Naive thymus-derived CD4-positive, alpha-beta T cell (primary cell): ENCODE measurements at regions of chr15 and their contacts with region 1.

Region 1: DNA sequence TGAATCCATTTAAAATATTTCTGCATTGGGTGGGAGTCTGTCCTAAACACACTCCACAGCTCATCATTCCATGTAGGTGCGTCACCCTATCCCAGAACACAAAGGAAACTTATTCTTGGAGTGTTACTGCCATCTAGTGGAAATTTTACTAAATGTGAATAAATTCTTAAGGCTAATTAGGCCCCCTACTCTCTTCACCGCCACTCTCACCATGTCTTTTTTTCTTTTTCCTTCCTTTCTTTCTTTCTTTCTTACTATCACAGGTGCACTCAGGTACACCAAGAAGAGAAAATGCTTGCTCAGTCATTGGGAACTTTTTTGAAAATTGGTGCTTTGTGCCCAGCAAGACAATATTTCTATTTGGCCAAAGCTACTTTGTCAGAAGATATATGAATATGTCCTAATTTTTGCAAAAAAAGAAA is 26.4 kb upstream of the ATP8B4 start:
- DNase-seq: peak in 6 of 9 donors; percentile 7 to 47 (median 36)
- ATAC-seq: peak; percentile 60
- H3K4me3 ChIP-seq: no peak overlapping the region
- H3K4me3 Mint-ChIP-seq: no peak overlapping the region
- H3K27ac ChIP-seq: no peak overlapping the region
- H3K27ac Mint-ChIP-seq: peak overlapping the region in 1 of 9 donors; percentile 66
- H3K4me1 ChIP-seq: no peaks in the 10 kb centered on the region
- H3K4me1 Mint-ChIP-seq: peaks cover 0 to 30% (median 0%) of the 10 kb centered on the region in 7 donors
- H3K27me3 ChIP-seq: no peaks in the 10 kb centered on the region
- H3K27me3 Mint-ChIP-seq: peaks cover 0 to 3% (median 0%) of the 10 kb centered on the region in 5 donors

Region 2: GRCh38 chr15:48963524-48964113 is 1181.8 kb before region 1 on chr15 and contains the start of gene SHC4:
- CTCF ChIA-PET with region 1: no interaction called
- POLR2A ChIA-PET with region 1: no interaction called
- intact Hi-C with region 1: loop called in 1 of 2 experiments (anchors 10 kb)
- DNase-seq: peak in 4 of 9 donors; percentile 21 to 37 (median 32)
- ATAC-seq: peak; percentile 64
- H3K4me3 ChIP-seq: peak within 1 kb of the TSS; percentile 58
- H3K4me3 Mint-ChIP-seq: peak within 1 kb of the TSS; percentile 68 to 91 (median 84)
- H3K27ac ChIP-seq: no peak within 1 kb of the TSS
- H3K27ac Mint-ChIP-seq: peak within 1 kb of the TSS in 3 of 9 donors; percentile 41 to 68 (median 56)
- H3K4me1 ChIP-seq: peaks cover 17 to 23% of the 10 kb centered on the region in 2 donors
- H3K4me1 Mint-ChIP-seq: peaks cover 15 to 41% (median 21%) of the 10 kb centered on the region in 7 donors
- H3K27me3 ChIP-seq: peaks cover 0 to 18% of the 10 kb centered on the region in 2 donors
- H3K27me3 Mint-ChIP-seq: peaks cover 13 to 65% (median 44%) of the 10 kb centered on the region in 5 donors
- total RNA-seq, gene SHC4: 1.2 TPM in 1 of 5 experiments, not detected in the others

Region 3: DNA sequence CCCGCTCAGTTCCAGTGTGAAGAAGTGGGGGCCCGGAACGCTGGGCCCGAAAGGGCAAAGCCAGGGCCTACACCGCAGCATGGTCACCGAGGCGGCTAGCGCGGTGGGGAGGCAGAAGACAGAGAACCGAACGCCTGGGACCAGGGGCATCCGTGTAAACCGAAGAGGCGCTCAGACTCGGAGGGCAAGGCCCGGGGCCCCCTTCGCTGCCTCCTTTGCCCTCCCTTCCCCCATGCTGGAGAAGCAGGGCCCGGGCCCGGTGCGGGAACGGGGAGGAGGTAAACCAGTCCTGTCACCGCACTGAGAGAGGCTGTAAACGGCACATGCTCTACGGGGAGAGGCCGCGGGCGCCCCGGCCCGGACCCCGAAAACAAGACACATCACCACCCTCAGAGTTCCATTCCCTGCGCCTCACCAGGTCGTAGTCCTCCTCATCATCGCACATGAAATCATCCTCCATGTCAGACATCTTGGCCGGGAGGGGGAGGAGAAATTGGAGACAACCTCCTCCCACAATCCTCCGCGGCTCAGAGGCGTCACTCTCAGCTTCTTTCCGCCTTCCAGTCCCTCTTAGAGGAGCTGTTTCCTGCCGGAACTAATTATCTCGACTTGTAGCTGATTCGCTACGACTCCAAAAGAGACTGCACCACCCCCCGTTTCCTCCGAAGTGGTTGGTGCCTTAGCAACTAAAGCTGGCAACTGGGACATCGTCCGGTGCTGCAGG is 990.2 kb before region 1 on chr15 and contains the start of gene COPS2:
- CTCF ChIA-PET with region 1: no interaction called
- POLR2A ChIA-PET with region 1: no interaction called
- intact Hi-C with region 1: loop called in 1 of 2 experiments (anchors 5 kb)
- DNase-seq: peak; percentile 69 to 96 (median 94)
- ATAC-seq: peak; percentile 99
- H3K4me3 ChIP-seq: peak within 1 kb of the TSS; percentile 88
- H3K4me3 Mint-ChIP-seq: peak within 1 kb of the TSS; percentile 95 to 100 (median 98)
- H3K27ac ChIP-seq: peak within 1 kb of the TSS; percentile 93
- H3K27ac Mint-ChIP-seq: peak within 1 kb of the TSS; percentile 93 to 100 (median 97)
- H3K4me1 ChIP-seq: peaks cover 9 to 25% of the 10 kb centered on the region in 2 donors
- H3K4me1 Mint-ChIP-seq: peaks cover 40 to 72% (median 59%) of the 10 kb centered on the region in 7 donors
- H3K27me3 ChIP-seq: no peaks in the 10 kb centered on the region
- H3K27me3 Mint-ChIP-seq: no peaks in the 10 kb centered on the region
- total RNA-seq, gene COPS2: 51.0 to 91.5 (median 63.6) TPM

Region 4: DNA sequence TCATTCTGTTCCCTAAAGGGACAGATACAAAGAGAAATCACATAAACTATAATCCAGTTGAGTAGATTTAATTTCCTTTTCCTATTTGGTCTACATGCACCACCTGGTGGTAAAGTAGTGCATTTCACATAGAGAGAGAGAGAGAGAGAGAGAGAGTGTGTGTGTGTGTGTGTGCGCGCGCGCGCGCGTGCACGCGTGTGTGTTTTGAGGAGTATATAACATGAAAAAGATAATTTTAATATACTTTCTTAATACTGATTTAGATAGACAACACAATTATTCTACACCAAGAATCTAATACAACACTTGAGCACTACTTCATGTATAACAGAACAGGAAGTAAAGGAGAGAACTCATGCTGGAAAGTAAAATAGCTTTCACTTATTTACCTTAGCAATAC is 723.5 kb before region 1 on chr15:
- CTCF ChIA-PET with region 1: no interaction called
- POLR2A ChIA-PET with region 1: no interaction called
- intact Hi-C with region 1: loop called (anchors 1 to 10 kb)
- DNase-seq: peak in 8 of 9 donors; percentile 5 to 60 (median 52)
- ATAC-seq: peak; percentile 75
- H3K4me3 ChIP-seq: no peak overlapping the region
- H3K4me3 Mint-ChIP-seq: peak overlapping the region in 8 of 10 donors; percentile 23 to 72 (median 49)
- H3K27ac ChIP-seq: no peak overlapping the region
- H3K27ac Mint-ChIP-seq: peak overlapping the region in 7 of 9 donors; percentile 10 to 84 (median 74)
- H3K4me1 ChIP-seq: no peaks in the 10 kb centered on the region
- H3K4me1 Mint-ChIP-seq: peaks cover 3 to 6% (median 4%) of the 10 kb centered on the region in 7 donors
- H3K27me3 ChIP-seq: no peaks in the 10 kb centered on the region
- H3K27me3 Mint-ChIP-seq: peaks cover 0 to 9% (median 0%) of the 10 kb centered on the region in 5 donors

Region 5: DNA sequence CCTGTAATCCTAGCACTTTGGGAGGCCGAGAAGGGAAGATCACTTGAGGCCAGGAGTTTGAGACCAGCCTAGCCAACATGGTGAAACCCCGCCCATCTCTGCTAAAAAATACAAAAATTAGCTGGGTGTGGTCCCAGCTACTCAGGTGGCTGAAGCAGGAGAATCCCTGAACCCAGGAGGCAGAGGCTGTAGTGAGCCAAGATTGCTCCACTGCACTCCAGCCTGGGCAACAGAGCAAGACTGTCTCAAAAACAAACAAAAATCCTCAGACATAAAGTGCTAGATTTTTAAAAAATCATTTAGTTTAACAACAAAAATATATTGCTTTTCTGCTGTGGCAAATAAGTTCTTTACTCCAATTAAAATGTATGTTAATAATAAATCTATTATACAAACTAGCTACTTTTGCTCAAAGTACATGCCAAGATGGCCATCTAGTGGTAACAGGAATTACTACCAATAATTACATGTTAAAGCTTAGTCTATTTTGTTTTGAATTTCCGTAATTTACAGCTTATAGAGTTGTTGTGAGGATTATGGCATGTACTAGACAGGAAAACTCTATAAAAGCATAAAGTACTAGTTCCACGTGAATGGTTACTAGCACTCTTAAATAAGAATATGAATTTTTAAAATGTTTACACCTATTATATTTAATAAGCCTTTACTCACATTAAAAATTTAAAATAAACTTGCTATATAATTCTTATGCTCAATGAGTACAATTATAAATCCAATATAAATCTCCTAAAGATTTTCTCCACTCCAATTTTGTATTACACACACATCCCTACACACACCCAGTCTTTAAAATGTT is 170.6 kb after region 1 on chr15:
- CTCF ChIA-PET with region 1: no interaction called
- POLR2A ChIA-PET with region 1: no interaction called
- intact Hi-C with region 1: loop called in 1 of 2 experiments (anchors 1 kb)
- DNase-seq: peak in 7 of 9 donors; percentile 8 to 47 (median 30)
- ATAC-seq: peak; percentile 66
- H3K4me3 ChIP-seq: no peak overlapping the region
- H3K4me3 Mint-ChIP-seq: no peak overlapping the region
- H3K27ac ChIP-seq: no peak overlapping the region
- H3K27ac Mint-ChIP-seq: no peak overlapping the region
- H3K4me1 ChIP-seq: peaks cover 0 to 6% of the 10 kb centered on the region in 2 donors
- H3K4me1 Mint-ChIP-seq: peaks cover 12 to 34% (median 21%) of the 10 kb centered on the region in 7 donors
- H3K27me3 ChIP-seq: no peaks in the 10 kb centered on the region
- H3K27me3 Mint-ChIP-seq: no peaks in the 10 kb centered on the region